Activated T-helper 2 cell treated with anti-CD3 and anti-CD28 coated beads, Interferon-gamma antibody, Interleukin-2, Interleukin-4, amounts not matched to agents 10 μg/mL and 5 μg/mL and 100 μg/mL, durations not matched to agents 14 hours and 24 hours and 36 hours (primary cell): ENCODE measurements at regions of chr4 and their contacts with region 1.

Region 1: DNA sequence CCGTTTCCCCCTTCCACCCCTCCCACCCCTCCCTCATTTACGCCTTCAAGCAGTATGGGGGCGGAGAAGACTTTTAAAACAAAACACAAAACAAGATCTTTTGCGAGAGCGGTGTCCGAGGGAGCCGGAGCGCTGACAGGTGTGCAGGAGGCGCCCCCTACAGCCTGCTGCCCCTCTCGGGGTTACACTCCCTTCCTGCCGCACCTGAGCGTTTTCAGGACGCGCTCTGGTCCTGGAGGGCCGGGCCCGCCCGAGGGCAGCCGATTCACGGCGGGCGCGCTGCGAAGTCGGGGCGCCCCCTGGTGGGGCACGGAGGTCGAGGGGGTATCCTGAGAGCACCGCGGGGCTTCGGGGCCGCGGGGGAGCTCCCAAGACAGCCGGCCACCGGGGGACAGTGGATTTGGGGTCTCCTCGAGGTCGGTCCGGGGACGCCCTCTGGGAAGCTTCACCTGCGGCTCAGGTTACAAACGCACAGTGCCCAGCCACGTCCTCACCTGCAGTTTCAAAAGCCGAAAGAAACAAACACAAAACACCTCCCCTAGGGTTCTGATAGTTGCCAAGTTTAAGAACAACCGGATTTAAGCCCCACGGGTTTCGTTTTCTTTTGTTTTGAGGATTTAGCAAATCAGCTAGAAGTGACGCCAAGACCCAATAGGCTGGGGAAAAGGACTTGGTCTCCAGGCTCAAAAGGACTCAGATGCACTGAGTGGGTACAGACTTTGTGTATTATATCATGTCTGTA is 8.0 kb upstream of the NEUROG2 start:
- DNase-seq: peak; percentile 68
- H3K4me3 Mint-ChIP-seq: peak overlapping the region; percentile 79
- H3K27ac Mint-ChIP-seq: no peak overlapping the region
- H3K4me1 Mint-ChIP-seq: peaks cover 20% of the 10 kb centered on the region
- H3K27me3 Mint-ChIP-seq: peaks cover 75% of the 10 kb centered on the region

Region 2: DNA sequence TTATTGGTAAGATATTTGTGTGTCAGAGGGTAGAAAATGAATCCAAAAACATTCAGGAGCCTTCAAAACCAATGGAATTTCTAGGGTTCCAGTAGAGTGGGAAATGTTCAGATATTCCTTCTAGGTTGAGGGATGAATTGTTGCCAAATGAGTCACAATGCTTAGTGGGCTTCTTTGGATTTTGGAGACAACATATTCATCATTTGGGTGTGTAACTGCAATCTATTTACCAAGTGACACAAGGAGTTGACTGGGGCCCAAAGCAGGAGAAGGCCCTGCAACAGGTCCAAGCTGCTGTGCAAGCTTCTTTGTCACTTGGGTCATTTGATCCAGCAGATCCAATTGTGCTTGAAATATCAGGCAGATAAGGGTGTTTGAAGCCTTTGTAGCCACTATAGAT is 1349.6 kb before region 1 on chr4:
- intact Hi-C with region 1: no loop called
- DNase-seq: no peak
- H3K4me3 Mint-ChIP-seq: no peak overlapping the region
- H3K27ac Mint-ChIP-seq: no peak overlapping the region
- H3K4me1 Mint-ChIP-seq: no peaks in the 10 kb centered on the region
- H3K27me3 Mint-ChIP-seq: no peaks in the 10 kb centered on the region

Region 3: DNA sequence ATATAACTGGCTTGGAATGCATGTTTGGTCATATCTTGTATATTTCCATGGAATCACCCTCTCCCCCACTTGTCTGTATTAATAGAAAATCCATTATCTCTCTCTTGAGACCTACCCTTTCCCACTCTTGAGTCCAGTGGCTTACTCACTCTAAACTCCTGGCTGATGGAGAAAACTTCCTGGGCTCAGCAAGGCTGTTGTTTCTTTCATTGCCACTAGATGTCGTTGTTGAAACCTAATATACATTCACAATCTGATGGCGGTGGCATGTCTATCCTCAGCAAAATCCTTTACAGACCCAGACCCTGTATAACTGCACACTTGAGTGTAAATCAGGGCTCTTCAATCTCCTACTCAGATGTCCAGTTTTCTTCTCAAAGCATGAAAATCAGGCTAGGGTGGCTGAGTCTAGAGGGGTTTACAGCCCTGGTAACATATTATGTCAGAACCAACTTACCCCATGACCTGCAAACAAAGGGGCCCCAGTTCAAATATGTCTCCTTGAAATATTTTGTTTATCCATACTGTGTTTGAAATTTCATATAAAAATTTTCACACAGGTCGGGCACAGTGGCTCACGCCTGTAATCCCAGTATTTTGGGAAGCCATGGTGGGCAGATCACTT is 448.7 kb before region 1 on chr4:
- intact Hi-C with region 1: loop called (anchors 2 kb)
- DNase-seq: no peak
- H3K4me3 Mint-ChIP-seq: no peak overlapping the region
- H3K27ac Mint-ChIP-seq: no peak overlapping the region
- H3K4me1 Mint-ChIP-seq: peaks cover 2% of the 10 kb centered on the region
- H3K27me3 Mint-ChIP-seq: peaks cover 21% of the 10 kb centered on the region

Region 4: DNA sequence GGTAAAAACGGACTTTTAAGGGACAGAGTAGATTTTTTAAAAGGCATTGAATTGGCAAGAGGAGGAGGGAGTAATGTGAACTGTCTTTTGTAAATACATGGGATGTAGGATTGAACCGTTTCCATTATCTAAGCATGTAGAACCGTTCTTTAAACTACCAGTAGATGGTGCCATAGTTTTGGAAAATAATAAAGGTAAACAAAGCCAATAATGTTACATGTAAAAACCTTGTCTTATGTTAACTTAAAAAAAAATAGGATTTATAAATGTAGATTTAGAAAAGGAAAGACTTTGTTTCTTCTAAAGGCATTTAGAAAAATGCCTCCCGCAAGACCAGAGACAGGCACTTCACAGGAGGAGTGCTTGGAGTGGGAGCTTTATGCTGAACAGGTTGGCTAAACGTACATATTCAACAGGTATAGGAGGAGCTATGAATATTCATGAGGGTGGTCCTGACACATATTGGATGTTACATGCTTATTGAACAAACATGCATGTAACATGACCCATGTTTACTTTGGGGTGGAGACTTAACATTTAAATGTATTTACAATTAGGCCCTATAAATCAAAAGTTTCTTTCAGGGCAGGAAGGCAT is 424.1 kb before region 1 on chr4:
- intact Hi-C with region 1: loop called (anchors 5 kb)
- DNase-seq: no peak
- H3K4me3 Mint-ChIP-seq: no peak overlapping the region
- H3K27ac Mint-ChIP-seq: no peak overlapping the region
- H3K4me1 Mint-ChIP-seq: peaks cover 5% of the 10 kb centered on the region
- H3K27me3 Mint-ChIP-seq: peaks cover 22% of the 10 kb centered on the region

Region 5: GRCh38 chr4:112327965-112328733 is 195.8 kb before region 1 on chr4:
- intact Hi-C with region 1: loop called (anchors 1 kb)
- DNase-seq: no peak
- H3K4me3 Mint-ChIP-seq: no peak overlapping the region
- H3K27ac Mint-ChIP-seq: no peak overlapping the region
- H3K4me1 Mint-ChIP-seq: peaks cover 4% of the 10 kb centered on the region
- H3K27me3 Mint-ChIP-seq: no peaks in the 10 kb centered on the region

Region 6: GRCh38 chr4:112509243-112510141 is 14.4 kb before region 1 on chr4:
- intact Hi-C with region 1: loop called (anchors 1 kb)
- DNase-seq: no peak
- H3K4me3 Mint-ChIP-seq: peak overlapping the region; percentile 41
- H3K27ac Mint-ChIP-seq: no peak overlapping the region
- H3K4me1 Mint-ChIP-seq: peaks cover 26% of the 10 kb centered on the region
- H3K27me3 Mint-ChIP-seq: peaks cover 81% of the 10 kb centered on the region

Region 7: GRCh38 chr4:113718252-113718651 is 1194.3 kb after region 1 on chr4:
- intact Hi-C with region 1: no loop called
- DNase-seq: no peak
- H3K4me3 Mint-ChIP-seq: no peak overlapping the region
- H3K27ac Mint-ChIP-seq: no peak overlapping the region
- H3K4me1 Mint-ChIP-seq: peaks cover 12% of the 10 kb centered on the region
- H3K27me3 Mint-ChIP-seq: no peaks in the 10 kb centered on the region